ENCODE measurements at regions of chr1 and their contacts with region 1.

Region 1: GRCh38 chr1:244394826-244395632 is 56.7 kb downstream of the ADSS2 start:
- DNase-seq: no peak
- H3K4me3 ChIP-seq: no peak overlapping the region
- H3K27ac ChIP-seq: no peak overlapping the region
- H3K4me1 ChIP-seq: no peaks in the 10 kb centered on the region
- H3K27me3 ChIP-seq: no peaks in the 10 kb centered on the region
- CTCF ChIP-seq: no peak

Region 2: DNA sequence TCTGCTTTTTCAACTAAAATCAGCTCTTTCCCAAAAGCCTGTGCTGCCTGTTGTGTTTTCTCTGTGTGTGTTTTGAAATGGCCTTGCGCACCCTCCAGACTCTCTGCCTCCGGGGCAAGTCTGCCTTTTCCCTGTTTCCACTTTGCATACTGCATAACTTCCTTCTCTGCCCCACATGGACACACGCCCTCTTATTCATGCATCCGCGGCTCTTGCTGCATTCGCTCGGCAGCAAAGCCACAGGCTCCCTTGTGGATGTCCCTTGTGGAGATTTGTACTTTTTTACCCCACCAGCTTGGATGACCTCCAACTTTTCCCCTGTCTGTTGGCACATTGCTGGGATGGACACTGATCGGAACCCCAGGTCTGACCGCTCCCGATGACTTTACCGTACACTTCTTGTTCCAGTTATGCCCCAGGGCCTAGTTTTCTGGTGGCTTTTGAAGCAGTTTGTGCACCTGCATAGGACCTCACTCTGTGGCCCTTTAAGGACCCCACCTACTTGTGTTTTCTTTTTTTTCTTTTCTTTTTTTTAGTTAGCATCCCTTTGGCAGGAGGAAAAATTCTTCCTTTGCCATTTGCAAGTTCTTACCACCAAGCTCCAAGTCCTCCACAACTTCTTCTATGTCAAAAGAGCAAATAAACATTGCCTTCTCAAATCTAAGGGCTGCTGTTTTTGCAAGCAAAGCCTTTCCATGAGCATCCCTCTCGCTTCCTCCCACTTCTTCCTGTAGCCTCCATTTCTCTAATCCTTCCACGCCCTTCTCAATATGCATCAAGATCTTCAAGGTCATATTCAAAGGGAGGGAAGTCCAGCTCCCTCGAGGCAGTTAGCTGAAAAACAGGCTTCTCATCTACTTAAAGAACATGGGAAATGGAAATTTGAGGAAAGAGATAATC is 90.6 kb before region 1 on chr1:
- CTCF ChIA-PET with region 1: no interaction called
- dilution Hi-C with region 1: no loop called
- in situ Hi-C with region 1: no loop called
- intact Hi-C with region 1: no loop called
- DNase-seq: no peak
- H3K4me3 ChIP-seq: no peak overlapping the region
- H3K27ac ChIP-seq: no peak overlapping the region
- H3K4me1 ChIP-seq: peaks cover 15% of the 10 kb centered on the region
- H3K27me3 ChIP-seq: no peaks in the 10 kb centered on the region
- CTCF ChIP-seq: no peak

Region 3: DNA sequence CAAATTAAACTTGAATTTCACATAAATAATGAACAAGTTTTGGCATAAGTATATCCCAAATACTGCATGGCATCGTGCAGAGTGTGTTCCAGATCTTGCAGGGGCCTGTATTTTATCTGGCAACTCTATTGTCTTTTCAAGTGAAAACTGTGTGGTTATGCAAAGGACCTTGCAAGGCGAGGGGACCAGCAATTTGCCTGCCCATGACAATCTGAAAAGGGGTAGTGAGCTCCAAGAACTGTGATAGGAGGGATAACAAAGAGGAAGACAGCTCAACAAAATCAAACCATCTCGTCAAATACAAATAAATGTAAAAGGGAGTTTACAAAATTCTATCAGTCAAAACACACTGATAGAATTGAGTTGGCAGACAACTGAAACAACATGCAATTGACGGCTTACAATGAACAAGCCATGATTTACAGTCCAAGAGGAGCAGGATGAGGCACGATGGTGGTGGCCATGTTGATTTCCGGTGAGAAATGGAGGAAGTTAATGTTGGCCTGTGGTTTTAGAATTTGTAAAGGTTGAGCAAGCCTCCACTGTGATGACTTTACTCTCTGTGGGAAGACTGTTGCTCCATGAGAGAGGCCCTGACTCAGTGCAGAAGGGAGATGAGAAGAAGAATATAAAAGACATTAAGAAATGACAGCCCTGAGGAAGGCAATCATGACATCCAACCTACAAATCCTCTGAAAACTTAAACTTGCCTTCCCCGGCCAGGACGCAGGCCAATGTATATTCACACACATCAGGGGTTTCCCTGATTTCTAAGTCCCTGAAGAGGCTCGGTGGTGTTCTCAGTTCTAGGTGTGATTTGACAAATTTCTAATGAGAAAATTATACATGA is 75.5 kb before region 1 on chr1:
- CTCF ChIA-PET with region 1: no interaction called
- dilution Hi-C with region 1: loop called (anchors 5 kb)
- in situ Hi-C with region 1: no loop called
- intact Hi-C with region 1: no loop called
- DNase-seq: peak; percentile 87
- H3K4me3 ChIP-seq: no peak overlapping the region
- H3K27ac ChIP-seq: no peak overlapping the region
- H3K4me1 ChIP-seq: peaks cover 27% of the 10 kb centered on the region
- H3K27me3 ChIP-seq: no peaks in the 10 kb centered on the region
- CTCF ChIP-seq: no peak

Region 4: GRCh38 chr1:244353551-244354091 is 41.4 kb before region 1 on chr1:
- CTCF ChIA-PET with region 1: no interaction called
- dilution Hi-C with region 1: loop called (anchors 5 kb)
- in situ Hi-C with region 1: no loop called
- intact Hi-C with region 1: no loop called
- DNase-seq: peak; percentile 92
- H3K4me3 ChIP-seq: no peak overlapping the region
- H3K27ac ChIP-seq: peak overlapping the region; percentile 45
- H3K4me1 ChIP-seq: peaks cover 22% of the 10 kb centered on the region
- H3K27me3 ChIP-seq: no peaks in the 10 kb centered on the region
- CTCF ChIP-seq: no peak

Region 5: GRCh38 chr1:244445320-244446181 is 50.5 kb after region 1 on chr1:
- CTCF ChIA-PET with region 1: no interaction called
- dilution Hi-C with region 1: loop called (anchors 5 kb)
- in situ Hi-C with region 1: no loop called
- intact Hi-C with region 1: no loop called
- DNase-seq: no peak
- H3K4me3 ChIP-seq: no peak overlapping the region
- H3K27ac ChIP-seq: peak overlapping the region; percentile 1
- H3K4me1 ChIP-seq: peaks cover 29% of the 10 kb centered on the region
- H3K27me3 ChIP-seq: no peaks in the 10 kb centered on the region
- CTCF ChIP-seq: no peak